B cell (primary cell): ENCODE measurements at regions of chr17 and their contacts with region 1.

Region 1: DNA sequence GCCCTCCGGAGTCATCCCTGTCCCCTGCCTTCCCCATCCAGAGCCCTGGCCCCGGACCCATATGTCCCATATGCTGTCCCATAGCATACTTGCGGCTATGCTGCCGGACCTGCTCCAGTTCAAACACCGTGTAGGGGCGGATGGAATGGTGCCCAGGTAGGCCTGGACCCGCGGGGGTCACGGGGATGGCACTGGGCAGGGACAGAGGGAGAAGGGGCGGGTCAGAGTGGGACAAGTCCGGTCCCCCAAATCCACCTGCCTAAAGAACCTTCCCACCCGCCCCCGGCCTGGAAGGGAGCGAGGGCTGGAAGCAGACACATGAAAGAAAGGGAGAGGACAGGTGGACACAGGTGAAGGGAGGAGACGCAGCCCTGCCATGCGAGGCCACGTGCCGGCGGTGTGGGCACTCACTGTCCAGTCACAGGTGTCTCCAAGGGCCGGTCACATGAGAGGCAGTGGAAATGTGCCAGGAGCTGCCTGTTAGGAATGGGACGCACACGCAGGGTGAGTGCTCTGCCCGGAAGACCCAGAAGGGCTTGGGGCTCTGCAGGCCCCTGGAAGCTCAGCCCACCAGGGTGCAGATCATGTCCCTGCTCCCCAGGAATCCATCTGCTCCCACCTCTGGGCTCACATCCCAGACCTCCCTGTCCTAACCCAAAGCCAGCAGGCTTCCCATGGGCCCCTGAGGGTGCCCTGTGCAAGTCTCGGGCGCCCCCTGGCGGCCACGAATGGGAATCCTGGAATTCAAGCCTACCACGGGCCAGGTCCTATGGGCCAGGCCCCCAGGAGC is 14.0 kb downstream of the UBALD2 start:
- DNase-seq: peak; percentile 88
- ATAC-seq: peak; percentile 59
- H3K4me3 ChIP-seq: no peak overlapping the region
- H3K4me3 Mint-ChIP-seq: no peak overlapping the region
- H3K27ac ChIP-seq: no peak overlapping the region
- H3K27ac Mint-ChIP-seq: peak overlapping the region; percentile 37
- H3K4me1 ChIP-seq: peaks cover 24 to 30% of the 10 kb centered on the region in 2 donors
- H3K4me1 Mint-ChIP-seq: peaks cover 32% of the 10 kb centered on the region
- H3K27me3 ChIP-seq: no peaks in the 10 kb centered on the region
- H3K27me3 Mint-ChIP-seq: no peaks in the 10 kb centered on the region
- CTCF ChIP-seq: peak; percentile 98

Region 2: GRCh38 chr17:76014184-76014924 is 264.8 kb before region 1 on chr17:
- CTCF ChIA-PET with region 1: interaction called, 56 read pairs
- POLR2A ChIA-PET with region 1: no interaction called
- intact Hi-C with region 1: no loop called
- DNase-seq: peak; percentile 83
- ATAC-seq: peak; percentile 98
- H3K4me3 ChIP-seq: no peak overlapping the region
- H3K4me3 Mint-ChIP-seq: no peak overlapping the region
- H3K27ac ChIP-seq: no peak overlapping the region
- H3K27ac Mint-ChIP-seq: peak overlapping the region; percentile 56
- H3K4me1 ChIP-seq: peaks cover 0 to 7% of the 10 kb centered on the region in 2 donors
- H3K4me1 Mint-ChIP-seq: no peaks in the 10 kb centered on the region
- H3K27me3 ChIP-seq: peaks cover 0 to 7% (median 2%) of the 10 kb centered on the region in 4 experiments
- H3K27me3 Mint-ChIP-seq: no peaks in the 10 kb centered on the region
- CTCF ChIP-seq: peak; percentile 98

Region 3: GRCh38 chr17:76111956-76112355 is 167.2 kb before region 1 on chr17:
- CTCF ChIA-PET with region 1: interaction called, 435 read pairs
- POLR2A ChIA-PET with region 1: interaction called, 5 read pairs
- intact Hi-C with region 1: no loop called
- DNase-seq: no peak
- ATAC-seq: no peak
- H3K4me3 ChIP-seq: no peak overlapping the region
- H3K4me3 Mint-ChIP-seq: no peak overlapping the region
- H3K27ac ChIP-seq: no peak overlapping the region
- H3K27ac Mint-ChIP-seq: no peak overlapping the region
- H3K4me1 ChIP-seq: no peaks in the 10 kb centered on the region
- H3K4me1 Mint-ChIP-seq: no peaks in the 10 kb centered on the region
- H3K27me3 ChIP-seq: no peaks in the 10 kb centered on the region
- H3K27me3 Mint-ChIP-seq: no peaks in the 10 kb centered on the region
- CTCF ChIP-seq: no peak

Region 4: DNA sequence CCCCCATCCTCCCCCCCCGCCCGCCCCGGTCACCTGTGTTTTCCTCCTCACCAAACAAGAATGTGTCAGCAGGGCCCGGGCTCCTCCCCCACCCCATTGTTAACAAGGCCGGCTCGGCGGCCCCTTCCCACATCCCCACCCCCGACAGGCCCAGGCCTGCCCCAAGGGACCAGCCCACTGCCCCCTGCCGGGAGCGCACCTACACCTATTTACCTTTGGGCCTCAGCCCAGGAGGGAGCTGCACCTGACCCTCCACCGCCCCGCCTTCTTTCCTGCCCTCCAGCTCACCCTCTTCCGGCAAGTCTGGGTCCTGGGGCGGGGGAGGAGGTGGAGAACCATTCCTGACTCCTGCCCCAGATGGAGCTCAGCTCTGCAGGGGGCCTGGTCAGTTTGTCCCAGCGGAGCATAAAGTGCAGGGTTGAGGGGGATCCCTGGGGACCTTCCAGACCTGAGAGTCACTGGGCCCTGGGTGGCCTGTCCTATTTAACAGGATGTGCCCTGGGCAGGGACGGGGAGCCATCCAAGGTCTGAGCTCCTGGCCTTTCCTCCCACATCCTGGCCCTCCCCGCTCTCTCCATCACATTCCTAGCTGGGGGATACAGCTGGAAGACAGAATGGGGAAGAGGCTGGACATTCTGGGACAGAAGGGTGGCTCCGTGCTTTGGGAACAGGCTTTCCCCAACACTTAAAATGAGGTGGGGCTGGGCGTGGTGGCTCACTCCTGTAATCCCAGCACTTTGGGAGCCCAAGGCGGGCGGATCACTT is 146.4 kb before region 1 on chr17:
- CTCF ChIA-PET with region 1: interaction called, 435 read pairs
- POLR2A ChIA-PET with region 1: interaction called, 3 read pairs
- intact Hi-C with region 1: no loop called
- DNase-seq: no peak
- ATAC-seq: no peak
- H3K4me3 ChIP-seq: no peak overlapping the region
- H3K4me3 Mint-ChIP-seq: no peak overlapping the region
- H3K27ac ChIP-seq: no peak overlapping the region
- H3K27ac Mint-ChIP-seq: no peak overlapping the region
- H3K4me1 ChIP-seq: no peaks in the 10 kb centered on the region
- H3K4me1 Mint-ChIP-seq: peaks cover 2% of the 10 kb centered on the region
- H3K27me3 ChIP-seq: peaks cover 0 to 15% (median 0%) of the 10 kb centered on the region in 4 experiments
- H3K27me3 Mint-ChIP-seq: peaks cover 19% of the 10 kb centered on the region
- CTCF ChIP-seq: no peak

Region 5: DNA sequence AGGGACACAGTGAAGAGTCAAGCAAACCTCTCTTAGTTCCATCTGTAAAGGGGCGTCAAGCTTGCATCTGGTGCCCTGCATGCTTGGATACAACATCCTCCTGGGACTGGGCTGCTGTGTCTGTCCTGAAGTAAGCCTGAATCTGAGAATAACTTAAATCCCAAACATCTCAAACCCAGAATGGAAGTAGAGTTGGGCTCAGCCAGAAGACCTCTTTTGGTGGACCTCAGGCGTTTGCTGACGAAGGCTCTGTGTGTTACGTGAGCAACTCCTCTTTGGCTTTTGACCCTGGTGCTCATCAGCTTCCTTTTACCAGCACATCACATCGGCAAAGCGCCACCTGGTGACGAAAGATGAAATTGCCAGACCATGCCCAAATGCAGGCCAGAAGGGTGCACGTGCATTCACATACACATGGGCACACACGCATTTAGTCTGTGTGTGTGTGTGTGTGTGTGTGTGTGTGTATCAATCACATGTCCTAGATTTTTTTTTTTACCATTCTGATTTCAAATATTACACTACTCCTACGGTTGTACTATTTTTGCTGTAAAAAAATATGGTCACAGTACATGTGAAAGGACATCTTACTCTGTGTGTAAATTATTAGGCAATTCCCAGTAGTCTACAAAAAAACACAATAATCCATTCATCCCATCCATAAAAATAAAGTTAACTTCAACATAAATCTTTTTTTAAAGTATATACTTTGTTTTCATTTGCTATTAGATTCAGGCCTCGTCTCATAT is 97.0 kb before region 1 on chr17:
- CTCF ChIA-PET with region 1: interaction called, 102 read pairs
- POLR2A ChIA-PET with region 1: no interaction called
- intact Hi-C with region 1: loop called (anchors 1 kb)
- DNase-seq: peak; percentile 95
- ATAC-seq: peak; percentile 96
- H3K4me3 ChIP-seq: no peak overlapping the region
- H3K4me3 Mint-ChIP-seq: peak overlapping the region; percentile 1
- H3K27ac ChIP-seq: no peak overlapping the region
- H3K27ac Mint-ChIP-seq: peak overlapping the region; percentile 74
- H3K4me1 ChIP-seq: peaks cover 10 to 11% of the 10 kb centered on the region in 2 donors
- H3K4me1 Mint-ChIP-seq: peaks cover 20% of the 10 kb centered on the region
- H3K27me3 ChIP-seq: no peaks in the 10 kb centered on the region
- H3K27me3 Mint-ChIP-seq: no peaks in the 10 kb centered on the region
- CTCF ChIP-seq: peak; percentile 89

Region 6: GRCh38 chr17:76252040-76252954 is 26.9 kb before region 1 on chr17:
- CTCF ChIA-PET with region 1: interaction called, 10 read pairs
- POLR2A ChIA-PET with region 1: no interaction called
- intact Hi-C with region 1: no loop called
- DNase-seq: peak; percentile 75
- ATAC-seq: peak; percentile 90
- H3K4me3 ChIP-seq: peak overlapping the region in 2 of 5 experiments; percentile 34 to 48
- H3K4me3 Mint-ChIP-seq: peak overlapping the region; percentile 81
- H3K27ac ChIP-seq: peak overlapping the region; percentile 2 to 45
- H3K27ac Mint-ChIP-seq: peak overlapping the region; percentile 89
- H3K4me1 ChIP-seq: peaks cover 23 to 24% of the 10 kb centered on the region in 2 donors
- H3K4me1 Mint-ChIP-seq: peaks cover 32% of the 10 kb centered on the region
- H3K27me3 ChIP-seq: no peaks in the 10 kb centered on the region
- H3K27me3 Mint-ChIP-seq: no peaks in the 10 kb centered on the region
- CTCF ChIP-seq: no peak

Region 7: GRCh38 chr17:76296186-76296585 is 17.0 kb after region 1 on chr17:
- CTCF ChIA-PET with region 1: interaction called, 40 read pairs
- POLR2A ChIA-PET with region 1: no interaction called
- intact Hi-C with region 1: no loop called
- DNase-seq: no peak
- ATAC-seq: no peak
- H3K4me3 ChIP-seq: no peak overlapping the region
- H3K4me3 Mint-ChIP-seq: no peak overlapping the region
- H3K27ac ChIP-seq: no peak overlapping the region
- H3K27ac Mint-ChIP-seq: no peak overlapping the region
- H3K4me1 ChIP-seq: no peaks in the 10 kb centered on the region
- H3K4me1 Mint-ChIP-seq: no peaks in the 10 kb centered on the region
- H3K27me3 ChIP-seq: no peaks in the 10 kb centered on the region
- H3K27me3 Mint-ChIP-seq: no peaks in the 10 kb centered on the region
- CTCF ChIP-seq: no peak